ENCODE measurements at regions of chr11 and their contacts with region 1.

Region 1: DNA sequence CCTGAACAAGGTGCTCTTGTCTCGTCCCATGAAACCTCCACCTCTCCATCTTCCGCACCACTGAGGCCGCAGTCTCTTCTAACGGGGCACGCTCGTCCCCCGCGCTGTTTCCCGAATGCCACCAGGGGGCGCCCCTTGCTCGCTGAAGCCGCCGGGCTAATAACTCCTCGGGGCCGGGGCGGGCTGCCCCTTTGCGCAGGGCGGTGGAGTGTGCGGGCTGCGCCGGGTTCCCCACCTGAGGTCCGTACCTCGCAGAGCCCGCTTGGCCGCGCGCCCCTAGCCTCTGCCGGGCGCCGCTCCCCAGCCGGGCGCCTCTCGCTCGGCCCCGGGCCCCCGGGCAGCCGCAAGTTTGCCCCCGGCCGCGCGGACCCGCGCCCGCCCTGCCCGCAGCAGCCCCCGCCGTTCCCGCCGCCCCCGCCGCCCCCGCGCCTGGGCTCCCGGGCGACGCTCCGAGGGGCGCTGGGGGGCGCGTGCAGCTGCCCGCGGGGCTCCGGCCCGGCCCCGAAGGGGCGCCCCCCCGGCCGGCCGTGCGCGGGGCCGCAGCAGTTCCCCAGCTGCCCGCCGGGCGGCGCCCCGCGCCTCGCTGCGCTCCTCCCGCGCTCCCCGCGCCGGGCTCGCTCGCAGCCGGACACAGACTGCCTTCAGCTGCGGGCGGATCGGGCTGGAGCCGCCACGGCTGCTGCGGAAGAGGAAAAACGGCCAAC is at the start of gene GRIK4:
- DNase-seq: peak; percentile 96
- H3K4me3 ChIP-seq: peak within 1 kb of the TSS; percentile 54 to 56; a peak in 3 of 4 replicates
- H3K27ac ChIP-seq: no peak within 1 kb of the TSS; a peak in 1 of 4 replicates
- H3K4me1 ChIP-seq: peaks cover 0 to 20% of the 10 kb centered on the region in 2 experiments; a peak in 1 of 4 replicates
- H3K27me3 ChIP-seq: peaks cover 18% of the 10 kb centered on the region; the same call in 1 of the 2 replicates
- CTCF ChIP-seq: peak; percentile 90
- EP300 ChIP-seq: no peak
- RAD21 ChIP-seq: peak; percentile 96
- polyA plus RNA-seq, gene GRIK4: 0.02 and 0.03 TPM in 2 replicates

Region 2: DNA sequence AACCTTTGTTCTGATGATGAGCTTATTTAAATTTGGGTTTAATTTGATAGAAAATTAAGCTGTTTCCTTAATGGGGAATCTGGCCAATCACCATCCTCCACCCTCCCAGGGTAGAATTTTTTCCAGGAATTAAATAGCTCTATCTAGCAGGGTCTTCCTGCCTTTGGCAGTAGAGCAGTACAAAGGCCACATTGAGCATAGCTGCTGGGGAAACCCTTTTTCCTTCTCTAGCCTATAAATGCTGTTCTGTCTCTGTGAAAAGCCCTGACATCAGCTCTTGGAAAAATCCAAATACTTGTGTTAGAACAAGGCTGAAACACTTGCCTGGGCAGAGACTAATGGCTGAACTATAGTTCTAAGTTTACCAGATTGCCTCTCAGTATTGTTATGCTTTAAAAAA is 120.0 kb before region 1 on chr11:
- CTCF ChIA-PET with region 1: no interaction called
- POLR2A ChIA-PET with region 1: no interaction called
- DNase-seq: no peak
- H3K4me3 ChIP-seq: no peak overlapping the region
- H3K27ac ChIP-seq: peak overlapping the region; percentile 2 to 44; a peak in 2 of 4 replicates
- H3K4me1 ChIP-seq: peaks cover 6 to 21% of the 10 kb centered on the region in 2 experiments; a peak in 2 of 4 replicates
- H3K27me3 ChIP-seq: no peaks in the 10 kb centered on the region
- CTCF ChIP-seq: no peak
- EP300 ChIP-seq: no peak
- RAD21 ChIP-seq: no peak

Region 3: DNA sequence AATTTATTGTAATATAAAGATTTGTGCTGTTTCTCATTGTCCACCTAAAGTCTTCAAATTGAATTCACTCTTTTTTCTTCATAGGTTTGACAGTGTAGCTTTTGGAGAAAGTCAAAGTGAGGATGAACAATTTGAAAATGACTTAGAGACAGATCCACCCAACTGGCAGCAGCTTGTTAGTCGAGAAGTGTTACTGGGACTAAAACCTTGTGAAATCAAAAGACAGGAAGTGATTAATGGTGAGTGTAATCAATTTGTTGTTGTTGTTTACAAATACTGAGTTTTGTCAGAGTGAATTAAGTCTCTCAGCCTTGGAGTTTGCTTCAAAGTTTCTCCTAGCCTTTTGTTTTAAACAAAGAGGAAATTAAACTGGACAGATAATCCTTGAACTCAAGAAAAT is 53.3 kb before region 1 on chr11:
- CTCF ChIA-PET with region 1: no interaction called
- POLR2A ChIA-PET with region 1: no interaction called
- DNase-seq: no peak
- H3K4me3 ChIP-seq: no peak overlapping the region
- H3K27ac ChIP-seq: peak overlapping the region in 1 of 2 experiments; percentile 0; a peak in 1 of 4 replicates
- H3K4me1 ChIP-seq: no peaks in the 10 kb centered on the region
- H3K27me3 ChIP-seq: no peaks in the 10 kb centered on the region
- CTCF ChIP-seq: no peak
- EP300 ChIP-seq: no peak
- RAD21 ChIP-seq: no peak

Region 4: DNA sequence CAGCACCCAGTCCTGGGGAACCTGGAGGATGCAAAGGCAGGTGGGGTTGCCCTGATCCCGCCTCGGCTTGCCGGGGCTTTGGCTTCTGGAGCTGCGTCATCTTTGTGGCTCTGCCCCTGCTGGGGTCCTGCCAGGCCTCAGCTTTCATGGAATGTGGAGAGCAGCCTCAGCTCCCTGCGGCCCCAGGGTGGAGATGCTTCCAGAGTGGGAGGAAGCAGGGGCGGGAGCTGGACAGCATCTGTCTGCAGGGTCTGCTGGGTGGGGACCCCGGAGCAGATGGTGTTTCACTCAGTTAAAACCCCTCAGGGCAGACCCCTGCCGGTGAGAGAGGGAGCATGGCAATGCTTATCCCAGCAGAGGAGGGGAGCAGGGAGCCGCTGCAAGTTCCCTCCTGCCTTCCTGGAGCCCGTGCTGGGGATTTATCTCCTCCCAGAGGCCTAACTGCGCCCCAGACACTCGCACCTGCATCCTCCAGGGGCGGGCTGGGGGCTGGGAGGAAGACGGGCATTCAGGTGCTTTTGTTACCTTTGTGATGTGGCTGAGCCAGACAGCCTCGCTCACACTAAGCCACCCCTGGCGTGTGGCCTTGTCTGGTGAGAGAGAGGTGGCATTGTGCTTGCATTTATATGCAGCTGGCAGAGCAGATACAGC is 16.0 kb after region 1 on chr11:
- CTCF ChIA-PET with region 1: interaction called, 56 read pairs
- POLR2A ChIA-PET with region 1: interaction called, 6 read pairs
- DNase-seq: peak; percentile 90
- H3K4me3 ChIP-seq: no peak overlapping the region
- H3K27ac ChIP-seq: peak overlapping the region in 1 of 2 experiments; percentile 59; a peak in 2 of 4 replicates
- H3K4me1 ChIP-seq: peaks cover 0 to 10% of the 10 kb centered on the region in 2 experiments; a peak in 1 of 4 replicates
- H3K27me3 ChIP-seq: peaks cover 10% of the 10 kb centered on the region
- CTCF ChIP-seq: no peak
- EP300 ChIP-seq: peak in 1 of 2 experiments; percentile 58; a peak in 2 of 4 replicates
- RAD21 ChIP-seq: peak; percentile 22

Region 5: GRCh38 chr11:120615391-120615790 is 104.1 kb after region 1 on chr11:
- CTCF ChIA-PET with region 1: interaction called, 12 read pairs
- POLR2A ChIA-PET with region 1: no interaction called
- DNase-seq: no peak
- H3K4me3 ChIP-seq: no peak overlapping the region
- H3K27ac ChIP-seq: no peak overlapping the region
- H3K4me1 ChIP-seq: peaks cover 0 to 13% of the 10 kb centered on the region in 2 experiments; a peak in 1 of 4 replicates
- H3K27me3 ChIP-seq: no peaks in the 10 kb centered on the region
- CTCF ChIP-seq: no peak
- EP300 ChIP-seq: no peak
- RAD21 ChIP-seq: no peak

Region 6: GRCh38 chr11:120710354-120711131 is 199.3 kb after region 1 on chr11:
- CTCF ChIA-PET with region 1: interaction called, 14 read pairs
- POLR2A ChIA-PET with region 1: no interaction called
- DNase-seq: peak; percentile 41
- H3K4me3 ChIP-seq: no peak overlapping the region
- H3K27ac ChIP-seq: no peak overlapping the region
- H3K4me1 ChIP-seq: peaks cover 0 to 17% of the 10 kb centered on the region in 2 experiments; a peak in 1 of 4 replicates
- H3K27me3 ChIP-seq: no peaks in the 10 kb centered on the region; the same call in 1 of the 2 replicates
- CTCF ChIP-seq: no peak
- EP300 ChIP-seq: no peak
- RAD21 ChIP-seq: no peak

Region 7: GRCh38 chr11:120929664-120930154 is 418.4 kb after region 1 on chr11:
- CTCF ChIA-PET with region 1: interaction called, 31 read pairs
- POLR2A ChIA-PET with region 1: no interaction called
- DNase-seq: peak; percentile 72
- H3K4me3 ChIP-seq: no peak overlapping the region
- H3K27ac ChIP-seq: no peak overlapping the region
- H3K4me1 ChIP-seq: peaks cover 0 to 16% of the 10 kb centered on the region in 2 experiments; a peak in 2 of 4 replicates
- H3K27me3 ChIP-seq: no peaks in the 10 kb centered on the region
- CTCF ChIP-seq: peak; percentile 59
- EP300 ChIP-seq: no peak
- RAD21 ChIP-seq: peak; percentile 53